Body of pancreas (tissue), 4 donors: ENCODE measurements at regions of chr5 and their contacts with region 1.

Region 1: DNA sequence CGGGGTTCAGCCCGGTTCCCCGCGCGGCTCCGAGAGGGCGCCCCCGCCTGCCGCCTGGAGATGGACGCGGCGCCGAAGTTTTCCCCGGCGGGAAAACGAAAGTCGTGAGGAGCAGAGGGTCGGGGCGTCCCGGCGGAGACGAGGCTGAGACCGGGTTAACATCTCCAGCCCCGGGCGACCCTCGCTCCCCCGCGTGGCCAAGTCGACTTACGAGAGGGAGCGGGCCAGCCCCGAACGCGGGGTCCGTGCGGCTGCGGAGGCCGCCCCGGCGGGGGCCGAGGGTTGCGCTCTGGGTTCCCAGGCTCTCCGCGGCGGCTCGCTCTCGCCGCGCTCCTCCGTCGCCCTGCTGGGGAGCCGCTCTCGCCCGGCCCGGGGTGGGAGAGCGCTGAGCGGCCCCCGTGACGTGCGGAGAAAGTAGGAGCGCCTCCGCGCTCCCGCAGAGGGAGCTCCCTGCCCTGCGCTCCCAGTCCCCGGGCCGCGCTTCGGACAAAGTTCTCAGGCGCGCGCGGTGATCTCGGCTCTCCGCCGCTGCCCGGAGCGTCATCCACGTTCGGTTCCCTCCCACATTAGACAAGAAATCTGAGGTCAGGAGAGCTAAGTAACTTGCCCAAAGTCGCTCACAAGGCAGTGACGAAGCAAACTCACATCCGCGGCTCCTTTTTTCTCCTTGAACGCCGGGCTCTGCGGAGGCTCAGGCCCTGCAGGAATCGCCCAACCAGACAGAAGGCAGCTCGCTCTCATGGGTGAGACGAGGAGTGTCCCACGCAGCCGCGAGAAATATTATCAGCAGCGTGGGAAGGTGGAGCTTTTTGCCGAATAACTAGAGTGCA is 1.2 kb upstream of the GCNT4 start:
- DNase-seq: peak; percentile 70 to 79 (median 72)
- ATAC-seq: peak; percentile 68
- H3K4me3 ChIP-seq: peak overlapping the region; percentile 84 to 87
- H3K27ac ChIP-seq: peak overlapping the region; percentile 76 to 94 (median 91)
- H3K4me1 ChIP-seq: peaks cover 41% of the 10 kb centered on the region
- H3K27me3 ChIP-seq: no peaks in the 10 kb centered on the region
- CTCF ChIP-seq: peak in 4 of 7 experiments; percentile 17 to 36 (median 22)
- POLR2A ChIP-seq: peak; percentile 59 to 88 (median 81)

Region 2: DNA sequence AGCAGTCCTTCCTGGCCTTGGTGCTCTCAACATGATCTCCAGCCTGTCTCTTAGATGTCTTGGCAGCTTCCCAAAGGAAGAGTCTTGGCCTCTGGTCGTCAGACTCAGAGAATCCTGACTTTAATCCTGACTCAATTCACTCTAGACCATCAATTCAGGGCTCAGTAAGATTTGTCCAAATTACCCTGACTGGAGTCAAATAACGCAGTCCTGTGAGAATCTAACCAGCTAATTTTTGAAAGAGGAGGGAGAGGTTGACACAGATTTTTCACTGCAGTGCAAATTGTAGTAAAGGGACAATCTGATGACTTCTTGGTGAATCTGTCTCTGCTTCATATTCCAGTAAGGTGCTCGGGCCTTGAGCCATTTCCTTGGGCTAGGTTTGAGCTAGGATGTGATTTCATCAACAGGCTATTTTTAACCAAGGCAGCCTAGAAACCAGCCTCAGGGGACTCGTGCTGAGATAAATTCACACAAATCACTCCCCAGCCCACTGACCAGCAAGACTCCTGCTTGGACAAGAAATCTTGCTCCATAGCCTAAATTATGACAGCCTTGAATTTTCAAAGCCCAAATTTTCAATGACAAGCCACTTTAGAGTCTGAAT is 670.4 kb before region 1 on chr5:
- intact Hi-C with region 1: no loop called
- DNase-seq: peak in 1 of 4 donors; percentile 39
- ATAC-seq: peak; percentile 40
- H3K4me3 ChIP-seq: no peak overlapping the region
- H3K27ac ChIP-seq: no peak overlapping the region
- H3K4me1 ChIP-seq: peaks cover 14% of the 10 kb centered on the region
- H3K27me3 ChIP-seq: no peaks in the 10 kb centered on the region
- CTCF ChIP-seq: no peak
- POLR2A ChIP-seq: no peak

Region 3: DNA sequence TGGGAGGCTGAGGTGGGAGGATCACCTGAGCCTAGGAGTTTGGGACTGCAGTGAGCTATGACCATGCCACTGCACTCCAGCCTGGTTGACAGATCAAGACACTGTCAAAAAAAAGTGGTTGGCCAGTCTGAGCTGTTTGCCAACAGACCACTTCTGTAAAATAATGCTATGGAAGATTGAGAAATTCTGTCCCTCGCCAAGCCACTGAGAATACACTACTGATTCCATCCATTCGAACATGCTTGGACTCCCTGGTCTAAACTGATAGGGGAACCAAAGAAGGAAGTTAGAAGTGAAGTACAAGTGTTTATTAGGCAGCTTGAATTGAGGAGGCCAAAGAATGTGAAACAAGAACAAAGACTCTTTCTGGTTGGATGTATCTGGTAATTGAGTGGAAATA is 440.2 kb before region 1 on chr5:
- intact Hi-C with region 1: no loop called
- DNase-seq: peak in 1 of 4 donors; percentile 16
- ATAC-seq: no peak
- H3K4me3 ChIP-seq: no peak overlapping the region
- H3K27ac ChIP-seq: no peak overlapping the region
- H3K4me1 ChIP-seq: peaks cover 8% of the 10 kb centered on the region
- H3K27me3 ChIP-seq: no peaks in the 10 kb centered on the region
- CTCF ChIP-seq: no peak
- POLR2A ChIP-seq: no peak

Region 4: DNA sequence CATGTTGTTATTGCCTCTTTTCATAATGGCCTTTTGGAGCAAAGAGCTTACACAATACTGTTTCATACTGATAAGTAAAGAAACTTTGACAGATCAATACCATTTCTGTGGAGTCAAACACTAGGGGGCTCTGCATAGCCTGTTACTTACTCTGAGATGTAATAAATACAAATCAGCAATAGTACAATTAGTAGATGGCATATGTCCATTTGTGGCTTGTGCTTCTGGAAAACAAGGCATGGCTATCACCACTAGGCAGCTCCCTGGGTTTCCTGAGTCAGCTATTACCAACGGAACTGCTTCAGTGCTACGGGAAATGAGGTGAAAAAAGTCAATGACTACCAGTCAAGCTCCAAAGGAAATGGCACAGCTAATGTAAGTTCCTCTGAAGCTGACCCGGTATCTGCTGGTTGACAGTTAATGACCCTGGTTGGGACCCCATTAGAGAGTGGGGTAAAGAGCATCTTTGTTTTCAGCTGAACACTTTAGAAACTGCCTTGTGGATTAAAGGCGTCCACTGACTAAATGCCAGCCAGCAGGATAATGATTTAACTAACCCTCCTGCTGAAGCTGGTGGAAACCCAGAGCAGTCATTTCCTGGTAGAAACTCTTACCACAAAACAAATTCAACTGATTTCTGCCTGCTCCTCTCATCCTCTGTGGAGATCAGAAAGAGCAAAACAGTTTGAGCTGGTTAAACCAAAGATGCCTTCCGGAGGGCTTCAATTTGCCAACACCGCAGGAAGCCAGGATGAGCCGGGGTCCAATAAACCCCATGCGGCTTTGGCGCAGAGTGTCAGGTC is 118.4 kb before region 1 on chr5:
- intact Hi-C with region 1: loop called (anchors 10 kb)
- DNase-seq: peak; percentile 50 to 84 (median 63)
- ATAC-seq: peak; percentile 86
- H3K4me3 ChIP-seq: no peak overlapping the region
- H3K27ac ChIP-seq: peak overlapping the region; percentile 12 to 80 (median 66)
- H3K4me1 ChIP-seq: peaks cover 16% of the 10 kb centered on the region
- H3K27me3 ChIP-seq: no peaks in the 10 kb centered on the region
- CTCF ChIP-seq: peak in 6 of 7 experiments; percentile 39 to 83 (median 71)
- POLR2A ChIP-seq: peak in 2 of 3 donors; percentile 22 to 28

Region 5: DNA sequence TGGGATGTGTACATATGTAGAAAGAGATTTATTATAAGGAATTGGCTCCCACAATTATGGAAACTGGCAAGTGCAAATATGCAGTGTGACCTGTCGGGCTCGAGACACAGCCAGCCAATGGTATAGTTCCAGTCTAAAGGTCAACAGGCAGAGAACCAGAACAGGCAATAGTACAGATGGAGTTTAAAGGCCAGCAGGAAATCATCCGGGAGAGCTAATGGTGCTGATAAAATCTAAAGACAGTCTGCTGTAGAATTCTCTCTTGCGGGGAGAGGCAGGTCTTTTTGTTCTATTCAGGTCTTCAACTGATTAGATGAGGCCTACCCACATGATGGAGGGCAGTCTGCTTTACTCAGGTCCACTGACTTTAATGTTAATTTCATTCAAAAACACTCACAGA is 161.4 kb after region 1 on chr5:
- intact Hi-C with region 1: no loop called
- DNase-seq: no peak
- ATAC-seq: no peak
- H3K4me3 ChIP-seq: no peak overlapping the region
- H3K27ac ChIP-seq: no peak overlapping the region
- H3K4me1 ChIP-seq: no peaks in the 10 kb centered on the region
- H3K27me3 ChIP-seq: no peaks in the 10 kb centered on the region
- CTCF ChIP-seq: no peak
- POLR2A ChIP-seq: no peak